Endothelial cell of umbilical vein (primary cell): ENCODE measurements at regions of chr7 and their contacts with region 1.

Region 1: DNA sequence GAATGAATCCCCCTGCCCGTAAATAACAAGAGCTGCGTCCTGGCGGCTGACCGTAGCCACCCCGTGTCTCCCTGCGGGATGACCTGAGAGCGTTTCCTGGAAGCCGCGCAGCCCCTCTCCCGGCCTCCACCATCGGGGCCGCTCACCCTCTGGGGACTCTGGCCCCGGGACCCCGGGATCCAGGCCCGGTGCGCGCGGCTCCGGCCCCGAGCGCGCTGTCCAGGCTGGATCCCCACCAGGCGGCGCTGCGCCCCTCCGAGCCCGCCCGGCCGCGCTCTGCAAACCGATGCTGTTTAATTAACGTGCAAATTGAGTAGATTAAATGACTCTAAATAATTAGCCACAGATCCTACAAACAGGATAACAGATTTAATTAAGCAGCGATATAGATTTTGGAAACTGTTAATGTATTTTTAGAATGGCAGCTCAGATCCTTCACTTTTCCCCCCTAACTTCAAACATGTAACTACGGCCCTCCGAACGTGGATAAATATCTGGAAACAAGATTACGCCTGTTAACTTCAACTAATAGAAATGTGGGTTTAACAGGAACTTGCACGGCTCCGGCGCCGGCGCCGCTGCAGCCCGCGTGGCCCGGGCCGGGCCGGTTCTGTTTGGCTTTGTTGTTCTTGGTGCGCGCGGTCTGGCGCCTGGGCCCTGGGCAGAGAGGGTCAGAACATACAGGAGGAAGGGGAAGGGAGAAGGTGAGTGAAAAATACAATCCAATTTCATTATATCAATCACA is 7.1 kb upstream of the UNCX start:
- DNase-seq: no peak
- H3K4me3 ChIP-seq: no peak overlapping the region
- H3K27ac ChIP-seq: no peak overlapping the region
- H3K4me1 ChIP-seq: no peaks in the 10 kb centered on the region
- H3K27me3 ChIP-seq: peaks cover 59 to 80% of the 10 kb centered on the region in 2 experiments
- CTCF ChIP-seq: peak; percentile 74 to 77
- POLR2A ChIP-seq: no peak

Region 2: DNA sequence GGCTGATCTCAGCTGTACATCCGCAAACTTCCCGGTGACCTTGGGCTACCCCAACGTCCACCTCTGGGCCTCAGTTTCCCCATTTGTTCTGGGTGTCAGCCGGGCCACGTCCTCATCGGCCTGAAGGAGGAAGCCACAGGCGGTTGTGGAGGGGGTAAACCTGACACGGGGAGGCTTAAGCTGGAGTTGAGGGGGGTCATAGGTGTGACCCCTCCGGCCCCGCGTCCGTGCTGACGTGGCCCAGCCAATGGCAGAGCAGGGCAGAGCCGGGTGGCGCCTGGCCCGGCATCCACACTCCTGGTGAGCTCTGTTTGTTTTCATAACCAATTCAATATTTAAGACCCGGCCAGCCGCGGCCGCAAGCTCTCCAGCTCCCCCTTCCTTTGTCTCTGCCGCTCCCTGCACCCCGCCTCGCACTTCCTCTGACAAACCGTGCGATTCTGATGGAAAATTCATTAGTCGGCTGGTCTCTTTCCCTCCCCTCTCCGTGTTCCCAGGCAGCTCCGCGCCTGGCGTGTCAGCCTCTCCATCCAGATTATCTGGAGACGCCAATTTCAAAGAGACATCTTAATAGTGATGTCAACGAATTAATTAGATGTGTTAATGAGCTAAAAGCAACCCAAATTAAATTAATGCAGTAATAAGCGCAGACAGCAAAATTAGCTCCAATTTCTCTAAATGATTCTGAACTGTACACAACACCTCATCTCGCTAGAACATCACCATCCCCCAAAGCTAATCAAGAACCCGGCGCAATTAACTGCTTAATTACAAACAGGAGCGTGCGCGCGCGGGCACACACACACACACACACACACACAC is 178.2 kb after region 1 on chr7:
- CTCF ChIA-PET with region 1: interaction called, 10 read pairs
- POLR2A ChIA-PET with region 1: no interaction called
- dilution Hi-C with region 1: no loop called
- intact Hi-C with region 1: no loop called
- DNase-seq: peak; percentile 63
- H3K4me3 ChIP-seq: no peak overlapping the region
- H3K27ac ChIP-seq: no peak overlapping the region
- H3K4me1 ChIP-seq: no peaks in the 10 kb centered on the region
- H3K27me3 ChIP-seq: peaks cover 3 to 11% of the 10 kb centered on the region in 2 experiments
- CTCF ChIP-seq: peak in 1 of 2 donors; percentile 19
- POLR2A ChIP-seq: no peak

Region 3: DNA sequence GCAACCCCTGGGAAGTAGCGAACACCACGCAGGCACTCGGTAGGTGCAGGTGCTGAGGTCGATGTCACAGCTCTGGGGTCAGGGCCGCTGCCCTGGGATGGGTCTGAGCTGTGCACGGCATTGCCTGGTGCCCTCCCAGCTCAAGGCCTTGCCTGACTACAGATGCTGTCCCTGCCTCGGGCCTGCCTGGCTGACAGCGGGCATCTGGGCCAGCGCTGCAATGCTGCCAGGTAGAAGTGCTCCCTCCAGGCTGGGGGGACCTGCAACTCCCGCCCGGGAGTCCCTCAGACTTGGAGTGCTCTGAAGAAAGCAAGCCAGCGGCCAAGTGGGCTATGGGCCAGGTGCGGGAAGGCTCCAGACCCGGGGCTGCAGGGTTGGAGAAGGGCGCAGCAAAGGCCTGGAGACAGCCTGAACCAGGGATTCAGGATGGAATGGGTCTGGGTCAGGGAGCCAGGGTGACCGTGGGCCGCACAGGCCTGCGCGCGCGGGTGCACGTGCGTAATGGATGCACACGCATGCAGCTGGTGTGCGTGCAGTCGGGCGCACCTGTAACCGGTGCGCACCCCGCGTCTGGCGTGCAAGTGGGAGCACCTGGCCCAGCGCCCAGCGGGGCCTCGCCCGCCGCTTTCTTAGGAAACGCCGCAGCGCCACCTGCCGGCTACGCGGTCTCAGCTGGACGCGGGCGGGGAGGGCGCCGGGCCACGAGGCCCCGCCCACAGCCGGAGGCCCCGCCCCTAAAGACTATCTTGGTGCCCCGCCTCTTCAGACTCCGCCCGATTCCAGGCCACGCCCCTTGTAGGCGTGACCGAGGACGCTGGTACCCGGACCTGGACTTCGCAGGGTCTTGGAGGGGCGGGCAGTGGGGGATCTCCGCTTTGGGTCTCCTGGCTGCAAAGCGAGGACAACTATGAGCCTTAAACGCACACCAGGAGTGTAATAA is 187.0 kb after region 1 on chr7:
- CTCF ChIA-PET with region 1: interaction called, 30 read pairs
- POLR2A ChIA-PET with region 1: no interaction called
- dilution Hi-C with region 1: no loop called
- intact Hi-C with region 1: loop called (anchors 1 kb)
- DNase-seq: peak; percentile 89
- H3K4me3 ChIP-seq: no peak overlapping the region
- H3K27ac ChIP-seq: no peak overlapping the region
- H3K4me1 ChIP-seq: no peaks in the 10 kb centered on the region
- H3K27me3 ChIP-seq: no peaks in the 10 kb centered on the region
- CTCF ChIP-seq: peak; percentile 85 to 86
- POLR2A ChIP-seq: no peak

Region 4: DNA sequence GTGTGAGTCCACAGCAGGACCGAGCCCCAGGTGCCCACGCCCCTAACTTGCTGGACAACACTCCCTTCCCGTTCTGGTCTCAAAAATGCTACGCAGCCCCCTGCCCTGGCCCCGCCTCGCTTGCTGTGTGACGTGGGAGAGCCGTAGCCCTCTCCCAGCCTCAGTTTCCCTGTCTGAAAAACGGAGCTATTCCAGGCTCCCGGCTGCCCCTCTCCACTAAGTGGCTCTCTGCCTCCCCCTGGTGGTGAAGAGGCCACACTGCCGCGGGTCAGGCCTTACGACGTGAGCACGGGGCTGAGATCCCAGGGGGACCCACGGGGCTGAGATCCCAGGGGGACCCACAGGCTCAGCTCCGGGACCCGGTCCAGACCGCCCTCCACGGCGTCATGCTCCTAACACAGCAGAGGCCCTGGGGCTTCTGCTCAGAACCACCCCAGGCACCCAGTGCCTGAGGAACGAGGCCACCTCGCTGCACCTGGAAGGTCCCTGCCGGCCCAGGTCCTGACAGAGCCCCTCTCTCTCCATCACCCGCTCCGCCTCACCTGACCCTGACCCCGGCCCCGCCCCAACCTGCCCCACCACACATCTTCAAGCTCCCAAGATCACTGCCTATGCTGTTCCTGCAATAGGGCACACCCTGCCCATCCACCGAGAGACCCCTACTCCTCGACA is 206.9 kb after region 1 on chr7:
- CTCF ChIA-PET with region 1: interaction called, 21 read pairs
- POLR2A ChIA-PET with region 1: no interaction called
- dilution Hi-C with region 1: no loop called
- intact Hi-C with region 1: loop called (anchors 5 kb)
- DNase-seq: peak; percentile 51
- H3K4me3 ChIP-seq: no peak overlapping the region
- H3K27ac ChIP-seq: no peak overlapping the region
- H3K4me1 ChIP-seq: no peaks in the 10 kb centered on the region
- H3K27me3 ChIP-seq: no peaks in the 10 kb centered on the region
- CTCF ChIP-seq: peak; percentile 95 to 97
- POLR2A ChIP-seq: no peak

Region 5: DNA sequence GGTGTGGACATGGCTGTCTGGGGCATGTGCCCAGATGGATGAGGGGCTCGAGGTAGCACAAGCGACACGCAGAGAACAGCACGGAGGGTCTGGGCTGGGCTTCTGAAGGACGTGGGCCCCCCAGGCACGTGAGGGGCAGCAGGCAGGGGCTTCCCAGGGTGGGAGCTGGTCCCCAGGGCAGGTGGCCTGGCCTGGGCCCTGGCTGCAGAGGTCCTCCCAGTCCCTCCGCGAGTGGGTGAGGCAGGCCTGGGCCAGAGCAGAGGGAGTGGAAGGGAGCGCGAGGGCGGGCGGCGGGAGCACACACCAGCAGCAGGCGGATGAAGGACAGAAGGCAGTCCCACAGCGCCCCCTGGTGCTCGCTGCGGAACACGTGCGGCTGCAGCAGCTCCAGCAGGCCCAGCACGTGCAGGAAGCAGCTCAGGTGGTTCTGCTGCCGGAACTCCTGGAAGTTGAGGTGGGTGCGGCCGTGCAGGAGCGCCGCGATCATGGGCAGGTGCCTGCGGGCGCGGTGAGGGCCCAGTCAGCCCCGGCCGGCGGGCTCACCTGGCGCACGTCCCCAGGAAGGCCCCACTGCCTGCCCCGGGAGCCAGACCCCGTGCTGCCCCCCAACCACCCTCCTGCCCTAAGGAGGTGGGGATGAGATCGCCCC is 248.4 kb after region 1 on chr7:
- CTCF ChIA-PET with region 1: interaction called, 29 read pairs
- POLR2A ChIA-PET with region 1: no interaction called
- dilution Hi-C with region 1: no loop called
- intact Hi-C with region 1: loop called (anchors 2 kb)
- DNase-seq: peak; percentile 64
- H3K4me3 ChIP-seq: no peak overlapping the region
- H3K27ac ChIP-seq: no peak overlapping the region
- H3K4me1 ChIP-seq: no peaks in the 10 kb centered on the region
- H3K27me3 ChIP-seq: no peaks in the 10 kb centered on the region
- CTCF ChIP-seq: peak; percentile 91 to 97
- POLR2A ChIP-seq: no peak